Transverse colon (tissue), 4 donors: ENCODE measurements at regions of chr3 and their contacts with region 1.

Region 1: GRCh38 chr3:44427683-44428082 is 49.8 kb downstream of the ZNF445 start:
- DNase-seq: no peak
- H3K4me3 ChIP-seq: no peak overlapping the region
- H3K27ac ChIP-seq: no peak overlapping the region
- H3K4me1 ChIP-seq: no peaks in the 10 kb centered on the region
- H3K27me3 ChIP-seq: no peaks in the 10 kb centered on the region
- CTCF ChIP-seq: no peak
- EP300 ChIP-seq: no peak
- POLR2A ChIP-seq: no peak

Region 2: GRCh38 chr3:44318891-44319311 is 108.8 kb before region 1 on chr3:
- in situ Hi-C with region 1: no loop called
- intact Hi-C with region 1: no loop called
- DNase-seq: no peak
- H3K4me3 ChIP-seq: no peak overlapping the region
- H3K27ac ChIP-seq: no peak overlapping the region
- H3K4me1 ChIP-seq: peaks cover 0 to 8% (median 0%) of the 10 kb centered on the region in 4 donors
- H3K27me3 ChIP-seq: peaks cover 5% of the 10 kb centered on the region
- CTCF ChIP-seq: no peak
- EP300 ChIP-seq: no peak
- POLR2A ChIP-seq: no peak

Region 3: DNA sequence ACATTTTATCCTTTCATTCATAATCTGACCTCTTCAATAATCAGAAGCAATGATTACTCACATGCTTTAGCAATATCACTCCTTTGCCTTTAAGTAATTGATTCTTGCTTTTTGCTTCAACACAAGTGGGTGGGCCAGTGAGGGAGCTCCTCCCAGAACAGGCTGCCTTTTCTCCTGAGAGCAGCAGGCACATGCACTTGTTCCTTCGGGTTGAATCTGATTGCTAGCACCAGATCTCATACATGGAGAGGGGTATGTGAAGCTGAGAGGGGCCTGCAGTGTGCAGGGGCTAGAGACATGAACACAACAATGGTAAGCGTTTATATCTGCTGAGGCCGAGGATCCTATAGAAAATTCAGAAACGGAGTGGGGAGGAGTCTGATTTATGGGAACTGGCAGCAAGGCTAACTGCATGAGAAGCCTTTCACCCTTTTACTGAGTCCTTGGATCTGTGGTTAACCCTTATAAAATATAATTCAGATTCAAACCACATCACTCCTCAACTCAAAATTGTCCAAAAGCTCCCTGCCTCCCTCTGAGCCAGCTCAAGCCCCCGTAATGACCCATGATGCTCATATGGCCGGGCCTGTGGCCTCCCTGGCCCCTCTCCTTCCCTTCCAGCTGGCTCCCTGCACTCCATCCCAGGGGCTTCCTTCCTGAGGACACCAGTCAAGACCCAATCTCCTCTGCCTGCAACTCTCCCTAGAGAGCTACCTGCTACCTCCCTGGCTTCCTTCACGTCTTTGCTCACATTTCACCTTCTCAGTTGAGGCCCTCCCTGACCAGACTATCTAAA is 17.4 kb after region 1 on chr3:
- in situ Hi-C with region 1: no loop called
- intact Hi-C with region 1: loop called (anchors 1 kb)
- DNase-seq: no peak
- H3K4me3 ChIP-seq: no peak overlapping the region
- H3K27ac ChIP-seq: no peak overlapping the region
- H3K4me1 ChIP-seq: peaks cover 9 to 15% (median 10%) of the 10 kb centered on the region in 4 donors
- H3K27me3 ChIP-seq: no peaks in the 10 kb centered on the region
- CTCF ChIP-seq: no peak
- EP300 ChIP-seq: no peak
- POLR2A ChIP-seq: no peak